ENCODE measurements at regions of chr2 and their contacts with region 1.

Region 1: GRCh38 chr2:202375609-202376408 is at the start of gene BMPR2:
- DNase-seq: peak; percentile 90
- ATAC-seq: peak; percentile 78
- H3K4me3 ChIP-seq: peak within 1 kb of the TSS; percentile 99
- H3K27ac ChIP-seq: peak within 1 kb of the TSS; percentile 82
- H3K4me1 ChIP-seq: peaks cover 16% of the 10 kb centered on the region; the same call in 1 of the 2 replicates
- H3K27me3 ChIP-seq: no peaks in the 10 kb centered on the region
- CTCF ChIP-seq: no peak
- total RNA-seq, gene BMPR2: 10.0 and 11.1 TPM in 2 replicates

Region 2: GRCh38 chr2:202185816-202186221 is 190.0 kb before region 1 on chr2:
- CTCF ChIA-PET with region 1: no interaction called
- POLR2A ChIA-PET with region 1: no interaction called
- intact Hi-C with region 1: no loop called
- DNase-seq: peak; percentile 71
- ATAC-seq: peak; percentile 94
- H3K4me3 ChIP-seq: no peak overlapping the region
- H3K27ac ChIP-seq: no peak overlapping the region
- H3K4me1 ChIP-seq: peaks cover 15% of the 10 kb centered on the region
- H3K27me3 ChIP-seq: no peaks in the 10 kb centered on the region
- CTCF ChIP-seq: no peak

Region 3: DNA sequence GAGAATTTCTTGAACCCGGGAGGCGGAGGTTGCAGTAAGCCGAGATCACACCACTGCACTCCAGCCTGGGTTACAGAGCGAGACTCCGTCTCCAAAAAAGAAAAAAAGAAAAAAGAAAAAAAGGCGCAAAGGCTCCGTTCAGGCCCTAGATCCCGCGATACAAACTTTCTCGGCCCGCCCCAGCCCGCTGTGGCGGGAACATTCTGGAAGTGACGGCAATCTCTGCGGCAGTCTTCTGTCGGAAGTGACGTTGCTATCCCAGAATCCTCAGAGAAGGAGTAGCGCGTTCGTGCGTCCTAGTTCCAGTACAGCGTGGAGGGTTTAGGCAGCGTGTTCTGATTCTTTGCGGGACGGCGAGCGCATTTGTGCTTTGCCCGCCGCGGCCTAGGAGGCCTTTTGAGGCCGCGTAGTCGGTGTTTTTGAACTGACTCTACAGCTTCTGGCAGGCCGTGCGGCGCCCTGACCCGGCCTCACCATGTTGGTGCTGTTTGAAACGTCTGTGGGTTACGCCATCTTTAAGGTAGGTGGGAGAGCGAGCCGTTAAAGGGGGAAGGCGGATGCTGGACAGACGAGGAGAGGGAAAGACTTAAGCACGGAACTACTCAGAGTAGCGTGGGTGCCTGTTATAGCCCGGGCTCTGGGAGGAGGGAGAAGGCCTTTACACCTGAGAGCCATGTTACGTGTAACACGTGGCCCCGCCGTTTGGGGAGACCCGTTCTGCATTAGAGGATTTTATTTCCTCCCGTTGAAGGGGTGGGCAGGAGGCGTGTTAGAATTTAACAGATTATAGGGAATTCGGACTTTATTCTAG is 110.1 kb before region 1 on chr2 and contains the start of gene NOP58:
- CTCF ChIA-PET with region 1: no interaction called
- POLR2A ChIA-PET with region 1: no interaction called
- intact Hi-C with region 1: loop called (anchors 5 kb)
- DNase-seq: peak; percentile 98
- ATAC-seq: peak; percentile 92
- H3K4me3 ChIP-seq: peak within 1 kb of the TSS; percentile 98
- H3K27ac ChIP-seq: peak within 1 kb of the TSS; percentile 82
- H3K4me1 ChIP-seq: peaks cover 24% of the 10 kb centered on the region
- H3K27me3 ChIP-seq: no peaks in the 10 kb centered on the region
- CTCF ChIP-seq: no peak
- total RNA-seq, gene NOP58: 90.0 and 112 TPM in 2 replicates

Region 4: DNA sequence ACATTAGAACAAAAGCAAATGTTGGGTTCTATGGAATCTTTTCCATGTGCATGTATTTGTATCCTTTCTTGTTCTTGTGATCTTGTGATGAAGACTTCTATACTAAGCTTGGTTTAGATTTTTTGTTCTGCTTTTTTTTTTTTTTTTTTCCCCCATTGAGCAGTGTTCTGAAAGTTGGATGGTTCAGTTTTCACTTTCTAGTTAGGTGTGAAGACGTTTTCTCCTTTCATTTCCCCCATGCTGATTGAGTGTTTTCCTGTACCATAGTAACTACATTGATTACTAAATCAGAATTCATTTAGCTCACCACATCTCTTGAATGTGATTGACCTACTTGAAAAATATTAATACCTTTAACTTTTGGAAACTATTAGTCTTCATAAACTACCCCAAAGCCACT is 76.1 kb before region 1 on chr2:
- CTCF ChIA-PET with region 1: no interaction called
- POLR2A ChIA-PET with region 1: no interaction called
- intact Hi-C with region 1: loop called (anchors 5 kb)
- DNase-seq: no peak
- ATAC-seq: no peak
- H3K4me3 ChIP-seq: no peak overlapping the region
- H3K27ac ChIP-seq: no peak overlapping the region
- H3K4me1 ChIP-seq: peaks cover 6% of the 10 kb centered on the region; the same call in 1 of the 2 replicates
- H3K27me3 ChIP-seq: no peaks in the 10 kb centered on the region
- CTCF ChIP-seq: no peak

Region 5: DNA sequence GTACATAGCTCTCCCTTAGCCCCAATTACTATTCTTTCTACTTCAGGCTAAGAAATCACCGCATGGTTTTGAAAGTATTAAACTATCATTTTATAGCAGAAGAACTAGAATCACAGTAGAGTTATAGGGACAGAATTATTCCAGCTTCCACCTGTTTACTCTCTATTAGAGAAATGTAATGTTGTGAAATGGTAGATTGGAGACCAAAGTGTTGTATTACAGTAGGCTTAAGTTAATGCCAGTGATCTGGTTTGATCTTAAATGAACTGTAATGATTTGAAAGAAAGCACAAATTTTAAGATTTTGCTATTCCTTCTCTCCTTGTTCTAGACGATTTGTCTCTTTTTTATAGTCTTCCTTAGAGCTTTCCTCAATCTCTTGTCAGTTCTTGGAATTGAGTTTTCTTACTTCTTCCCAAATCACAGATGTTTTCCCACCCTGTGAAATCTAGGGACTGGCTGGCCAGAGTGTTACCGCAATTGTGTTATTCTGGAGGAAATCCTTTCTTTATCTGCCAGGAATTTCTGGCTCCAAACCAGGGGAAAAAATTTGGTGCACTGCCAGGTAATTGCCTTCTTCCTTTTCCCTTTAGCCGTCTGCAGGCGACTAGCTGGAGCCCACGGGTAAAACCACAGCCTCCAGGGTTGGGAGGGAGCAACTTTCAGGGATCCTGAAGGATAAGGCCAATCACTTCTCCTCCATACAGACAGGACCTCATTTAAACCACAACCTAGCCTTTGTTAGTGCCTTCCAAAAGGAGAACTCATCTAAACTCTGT is 58.5 kb before region 1 on chr2:
- CTCF ChIA-PET with region 1: no interaction called
- POLR2A ChIA-PET with region 1: no interaction called
- intact Hi-C with region 1: loop called (anchors 5 kb)
- DNase-seq: peak; percentile 86
- ATAC-seq: peak; percentile 71
- H3K4me3 ChIP-seq: no peak overlapping the region
- H3K27ac ChIP-seq: no peak overlapping the region
- H3K4me1 ChIP-seq: peaks cover 12% of the 10 kb centered on the region
- H3K27me3 ChIP-seq: no peaks in the 10 kb centered on the region
- CTCF ChIP-seq: no peak

Region 6: GRCh38 chr2:202339071-202339870 is 36.5 kb before region 1 on chr2:
- CTCF ChIA-PET with region 1: no interaction called
- POLR2A ChIA-PET with region 1: interaction called, 4 read pairs
- intact Hi-C with region 1: loop called (anchors 1 kb)
- DNase-seq: peak; percentile 98
- ATAC-seq: peak; percentile 98
- H3K4me3 ChIP-seq: no peak overlapping the region
- H3K27ac ChIP-seq: peak overlapping the region; percentile 65
- H3K4me1 ChIP-seq: peaks cover 13% of the 10 kb centered on the region
- H3K27me3 ChIP-seq: no peaks in the 10 kb centered on the region
- CTCF ChIP-seq: no peak

Measured in PC-3 (cell line).